ENCODE measurements at regions of chr20 and their contacts with region 1.

Region 1: DNA sequence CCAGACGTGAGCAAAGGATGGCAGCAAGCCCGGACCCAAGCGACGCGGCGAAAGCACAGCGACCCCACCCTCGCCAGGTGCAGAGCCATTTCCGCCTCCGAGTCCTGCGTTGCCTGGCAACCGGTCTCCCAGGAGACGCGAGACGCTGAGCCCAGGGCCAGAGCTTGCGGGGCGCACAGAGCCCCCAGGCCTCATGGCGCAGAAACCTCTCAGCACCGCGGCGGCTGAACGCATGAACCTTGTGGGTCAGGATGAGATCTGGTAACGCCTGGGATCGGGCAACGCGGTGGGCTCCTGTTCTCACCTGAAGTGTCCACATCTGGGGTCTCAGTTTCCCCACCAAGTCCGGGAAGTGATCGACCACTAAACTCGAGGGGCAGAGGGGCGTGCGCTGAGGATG is 77.7 kb downstream of the ANKRD60 start:
- DNase-seq: no peak
- ATAC-seq: no peak
- H3K4me3 ChIP-seq: no peak overlapping the region
- H3K27ac ChIP-seq: no peak overlapping the region
- H3K4me1 ChIP-seq: no peaks in the 10 kb centered on the region
- H3K27me3 ChIP-seq: peaks cover 0 to 87% (median 68%) of the 10 kb centered on the region in 7 donors
- CTCF ChIP-seq: no peak

Region 2: DNA sequence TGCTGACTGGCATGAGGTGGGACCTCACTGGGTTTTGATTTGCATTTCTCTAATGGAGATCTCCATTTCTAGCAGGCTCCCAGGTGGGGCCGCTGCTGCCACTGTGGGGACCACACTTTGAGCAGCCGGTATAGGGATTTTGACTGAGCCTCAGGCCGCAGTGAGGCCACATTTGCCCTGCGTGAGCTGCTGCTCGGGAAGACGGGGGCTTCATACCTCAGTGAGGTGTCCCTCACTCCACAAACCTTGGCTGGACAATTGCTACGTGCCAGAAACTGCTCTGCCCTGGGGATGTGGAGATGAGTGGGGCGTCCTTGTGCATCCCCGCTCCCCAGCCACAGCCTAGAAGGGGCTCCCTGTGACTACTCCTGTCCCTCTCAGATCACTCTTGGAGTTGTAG is 56.6 kb before region 1 on chr20:
- intact Hi-C with region 1: loop called in 1 of 10 experiments (anchors 10 kb)
- DNase-seq: no peak
- ATAC-seq: no peak
- H3K4me3 ChIP-seq: no peak overlapping the region
- H3K27ac ChIP-seq: no peak overlapping the region
- H3K4me1 ChIP-seq: no peaks in the 10 kb centered on the region
- H3K27me3 ChIP-seq: peaks cover 0 to 12% (median 0%) of the 10 kb centered on the region in 7 donors
- CTCF ChIP-seq: no peak